Activated B cell treated with CpG ODN at 0.5 μM for 24 hours (primary cell): ENCODE measurements at regions of chr17 and their contacts with region 1.

Region 1: GRCh38 chr17:42609182-42609813 is at the starts of genes RETREG3 and TUBG1:
- DNase-seq: peak; percentile 98
- ATAC-seq: peak; percentile 90
- H3K4me3 Mint-ChIP-seq: peak within 1 kb of the TSS; percentile 100
- H3K27ac Mint-ChIP-seq: peak within 1 kb of the TSS; percentile 98
- H3K4me1 Mint-ChIP-seq: peaks cover 47% of the 10 kb centered on the region
- H3K27me3 Mint-ChIP-seq: no peaks in the 10 kb centered on the region
- CTCF ChIP-seq: no peak
- total RNA-seq, gene RETREG3: 60.0 and 63.5 TPM in 2 replicates
- total RNA-seq, gene TUBG1: 25.0 and 26.8 TPM in 2 replicates

Region 2: DNA sequence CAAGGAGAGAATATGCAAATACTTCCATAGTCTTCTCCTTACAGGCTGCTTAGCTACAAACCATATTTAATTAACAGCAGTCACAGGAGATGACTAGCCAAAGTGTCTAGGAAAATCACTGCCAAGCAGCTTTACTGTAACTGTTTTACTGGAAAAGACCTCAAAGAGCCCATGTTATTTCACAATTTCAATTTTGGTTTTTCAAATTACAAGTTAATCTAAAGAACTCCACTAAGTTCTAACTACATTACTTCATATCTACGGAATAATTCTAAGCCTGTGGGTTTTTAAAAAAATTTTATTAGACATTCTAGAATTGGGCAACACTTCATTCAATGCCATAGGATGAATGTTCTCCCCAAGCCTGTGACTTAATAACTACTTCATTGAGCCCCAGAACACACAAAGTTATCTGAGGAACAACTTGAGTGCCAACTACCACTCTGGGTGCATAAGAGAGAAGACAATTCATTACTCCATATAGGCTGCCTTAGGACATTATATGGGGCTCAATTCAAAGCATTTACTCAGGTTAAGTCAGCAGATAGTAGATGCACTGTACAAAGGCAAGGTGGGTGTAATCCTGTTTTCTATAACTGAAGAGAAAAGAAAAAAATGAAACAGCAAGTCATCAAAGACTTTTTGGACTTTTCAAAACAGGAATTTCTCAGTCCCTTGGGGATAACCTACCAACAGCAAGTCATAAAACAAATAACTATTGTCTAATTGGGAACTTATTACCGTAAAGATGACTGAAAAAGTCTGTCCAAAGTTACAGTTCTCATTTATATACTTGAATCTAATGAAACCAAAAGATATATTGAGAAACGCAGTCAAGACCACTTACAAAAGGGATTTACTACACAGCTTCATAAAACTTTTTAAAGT is 254.1 kb before region 1 on chr17:
- CTCF ChIA-PET with region 1: no interaction called
- POLR2A ChIA-PET with region 1: no interaction called
- intact Hi-C with region 1: no loop called
- DNase-seq: no peak
- ATAC-seq: no peak
- H3K4me3 Mint-ChIP-seq: no peak overlapping the region
- H3K27ac Mint-ChIP-seq: no peak overlapping the region
- H3K4me1 Mint-ChIP-seq: peaks cover 38% of the 10 kb centered on the region
- H3K27me3 Mint-ChIP-seq: no peaks in the 10 kb centered on the region
- CTCF ChIP-seq: no peak

Region 3: DNA sequence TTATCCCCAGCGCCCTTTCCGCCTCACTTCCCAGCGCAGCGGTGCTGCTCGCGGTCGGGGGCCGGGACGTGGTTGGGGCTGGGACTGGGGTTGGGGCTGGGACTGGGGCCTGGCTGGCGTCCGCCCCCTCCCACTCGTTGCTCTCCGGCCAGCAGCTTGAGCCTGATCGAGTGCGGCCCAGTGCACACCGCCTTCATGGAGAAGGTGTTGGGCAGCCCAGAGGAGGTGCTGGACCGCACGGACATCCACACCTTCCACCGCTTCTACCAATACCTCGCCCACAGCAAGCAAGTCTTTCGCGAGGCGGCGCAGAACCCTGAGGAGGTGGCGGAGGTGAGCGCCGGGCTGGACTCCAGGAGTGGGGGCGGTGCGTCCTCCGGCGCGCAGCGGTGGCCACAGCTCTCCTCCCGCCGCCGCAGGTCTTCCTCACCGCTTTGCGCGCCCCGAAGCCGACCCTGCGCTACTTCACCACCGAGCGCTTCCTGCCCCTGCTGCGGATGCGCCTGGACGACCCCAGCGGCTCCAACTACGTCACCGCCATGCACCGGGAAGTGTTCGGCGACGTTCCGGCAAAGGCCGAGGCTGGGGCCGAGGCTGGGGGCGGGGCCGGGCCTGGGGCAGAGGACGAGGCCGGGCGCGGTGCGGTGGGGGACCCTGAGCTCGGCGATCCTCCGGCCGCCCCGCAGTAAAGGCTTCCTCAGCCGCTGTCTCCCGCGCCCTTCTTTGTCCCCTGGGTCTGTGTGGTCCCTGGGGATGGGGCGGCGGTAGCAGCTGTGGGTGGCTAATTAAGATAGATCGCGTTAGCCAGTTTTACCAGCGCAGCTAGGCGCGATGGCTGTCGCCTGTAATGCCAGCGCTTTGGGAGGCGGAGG is 54.8 kb before region 1 on chr17:
- CTCF ChIA-PET with region 1: no interaction called
- POLR2A ChIA-PET with region 1: interaction called, 8 read pairs
- intact Hi-C with region 1: loop called (anchors 1 kb)
- DNase-seq: peak; percentile 88
- ATAC-seq: peak; percentile 89
- H3K4me3 Mint-ChIP-seq: peak overlapping the region; percentile 93
- H3K27ac Mint-ChIP-seq: peak overlapping the region; percentile 93
- H3K4me1 Mint-ChIP-seq: peaks cover 27% of the 10 kb centered on the region
- H3K27me3 Mint-ChIP-seq: no peaks in the 10 kb centered on the region
- CTCF ChIP-seq: no peak

Region 4: GRCh38 chr17:42598905-42599304 is 10.4 kb before region 1 on chr17:
- CTCF ChIA-PET with region 1: no interaction called
- POLR2A ChIA-PET with region 1: interaction called, 18 read pairs
- intact Hi-C with region 1: no loop called
- DNase-seq: no peak
- ATAC-seq: no peak
- H3K4me3 Mint-ChIP-seq: no peak overlapping the region
- H3K27ac Mint-ChIP-seq: no peak overlapping the region
- H3K4me1 Mint-ChIP-seq: peaks cover 26% of the 10 kb centered on the region
- H3K27me3 Mint-ChIP-seq: no peaks in the 10 kb centered on the region
- CTCF ChIP-seq: no peak

Region 5: DNA sequence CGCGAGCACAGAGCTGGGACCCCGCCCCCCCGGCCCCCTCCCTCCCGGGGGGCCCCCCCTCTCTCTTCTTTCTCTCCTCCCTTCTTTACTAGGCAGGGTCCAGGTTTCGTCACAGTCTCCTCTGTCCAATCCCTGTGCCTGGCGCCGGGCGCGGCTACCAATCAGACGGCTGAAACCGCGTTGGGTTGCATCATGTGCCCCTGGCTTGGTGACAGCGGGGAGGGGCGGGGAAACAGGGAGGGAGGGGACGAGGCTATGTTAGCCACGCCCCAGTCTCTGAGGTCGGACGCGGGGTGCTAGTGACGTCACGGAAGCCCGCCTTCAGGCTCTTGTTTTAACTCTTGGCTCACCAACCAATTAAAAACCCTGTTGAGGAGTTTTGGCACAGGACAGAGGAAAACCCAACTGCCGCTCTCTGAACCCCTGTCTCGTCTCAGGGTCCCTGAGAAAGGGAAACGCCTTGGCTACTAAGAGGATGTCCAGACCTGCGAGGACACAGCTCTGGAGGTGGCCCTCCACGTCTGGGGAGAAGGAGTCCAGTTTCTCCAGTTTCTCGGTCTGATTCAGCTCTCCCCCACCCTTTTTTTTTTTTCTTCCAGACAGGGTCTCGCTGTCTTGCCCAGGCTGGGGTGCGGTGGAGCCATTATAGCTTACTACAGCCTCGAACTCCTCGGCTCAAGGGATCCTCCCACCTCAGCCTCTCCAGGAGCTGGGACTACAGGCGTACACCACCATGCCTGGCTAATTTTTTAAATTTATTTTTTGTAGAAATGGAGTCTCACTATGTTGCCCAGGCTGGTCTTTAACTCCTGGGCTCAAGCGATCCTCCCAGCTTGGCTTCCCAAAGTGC is 67.9 kb after region 1 on chr17:
- CTCF ChIA-PET with region 1: interaction called, 10 read pairs
- POLR2A ChIA-PET with region 1: interaction called, 43 read pairs
- intact Hi-C with region 1: loop called (anchors 1 kb)
- DNase-seq: peak; percentile 86
- ATAC-seq: peak; percentile 74
- H3K4me3 Mint-ChIP-seq: peak overlapping the region; percentile 87
- H3K27ac Mint-ChIP-seq: peak overlapping the region; percentile 78
- H3K4me1 Mint-ChIP-seq: peaks cover 65% of the 10 kb centered on the region
- H3K27me3 Mint-ChIP-seq: peaks cover 12% of the 10 kb centered on the region
- CTCF ChIP-seq: no peak